SK-N-SH (cell line): ENCODE measurements at regions of chr15 and their contacts with region 1.

Region 1: GRCh38 chr15:88878720-88879184 is 16.6 kb downstream of the HAPLN3 start:
- DNase-seq: peak; percentile 85
- H3K4me3 ChIP-seq: no peak overlapping the region
- H3K27ac ChIP-seq: no peak overlapping the region
- H3K4me1 ChIP-seq: no peaks in the 10 kb centered on the region
- H3K27me3 ChIP-seq: no peaks in the 10 kb centered on the region; the same call in 1 of the 2 replicates
- CTCF ChIP-seq: peak; percentile 73
- EP300 ChIP-seq: no peak
- RAD21 ChIP-seq: peak; percentile 66

Region 2: DNA sequence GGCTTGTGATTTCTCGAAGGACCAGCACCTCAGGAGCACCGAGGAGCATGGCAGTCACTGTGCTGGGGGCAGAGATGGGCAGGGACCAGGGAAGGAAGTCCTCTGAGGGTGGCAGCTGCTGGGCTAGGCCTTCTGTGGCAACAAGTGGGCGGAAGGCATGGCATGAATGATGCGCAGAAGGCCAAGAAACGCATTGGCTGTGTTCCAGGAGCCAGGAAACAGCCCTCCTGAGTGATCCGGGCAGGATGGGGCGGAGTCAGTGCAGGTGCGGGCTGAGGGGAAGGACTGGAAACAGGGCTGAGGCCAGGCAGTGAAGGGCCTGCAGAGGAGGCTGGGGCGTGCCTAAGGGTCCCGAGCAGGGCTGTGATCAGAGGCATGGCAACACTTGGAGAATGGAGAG is 387.6 kb before region 1 on chr15:
- CTCF ChIA-PET with region 1: no interaction called
- POLR2A ChIA-PET with region 1: no interaction called
- DNase-seq: no peak
- H3K4me3 ChIP-seq: no peak overlapping the region
- H3K27ac ChIP-seq: no peak overlapping the region
- H3K4me1 ChIP-seq: no peaks in the 10 kb centered on the region
- H3K27me3 ChIP-seq: no peaks in the 10 kb centered on the region
- CTCF ChIP-seq: no peak
- EP300 ChIP-seq: no peak
- RAD21 ChIP-seq: no peak

Region 3: GRCh38 chr15:88797663-88798339 is 81.0 kb before region 1 on chr15:
- CTCF ChIA-PET with region 1: no interaction called
- POLR2A ChIA-PET with region 1: no interaction called
- DNase-seq: no peak
- H3K4me3 ChIP-seq: no peak overlapping the region
- H3K27ac ChIP-seq: no peak overlapping the region
- H3K4me1 ChIP-seq: no peaks in the 10 kb centered on the region
- H3K27me3 ChIP-seq: peaks cover 12% of the 10 kb centered on the region
- CTCF ChIP-seq: no peak
- EP300 ChIP-seq: no peak
- RAD21 ChIP-seq: no peak

Region 4: GRCh38 chr15:88841236-88841635 is 37.5 kb before region 1 on chr15:
- CTCF ChIA-PET with region 1: no interaction called
- POLR2A ChIA-PET with region 1: no interaction called
- DNase-seq: no peak
- H3K4me3 ChIP-seq: no peak overlapping the region
- H3K27ac ChIP-seq: no peak overlapping the region
- H3K4me1 ChIP-seq: no peaks in the 10 kb centered on the region
- H3K27me3 ChIP-seq: no peaks in the 10 kb centered on the region; the same call in 1 of the 2 replicates
- CTCF ChIP-seq: no peak
- EP300 ChIP-seq: no peak
- RAD21 ChIP-seq: no peak

Region 5: DNA sequence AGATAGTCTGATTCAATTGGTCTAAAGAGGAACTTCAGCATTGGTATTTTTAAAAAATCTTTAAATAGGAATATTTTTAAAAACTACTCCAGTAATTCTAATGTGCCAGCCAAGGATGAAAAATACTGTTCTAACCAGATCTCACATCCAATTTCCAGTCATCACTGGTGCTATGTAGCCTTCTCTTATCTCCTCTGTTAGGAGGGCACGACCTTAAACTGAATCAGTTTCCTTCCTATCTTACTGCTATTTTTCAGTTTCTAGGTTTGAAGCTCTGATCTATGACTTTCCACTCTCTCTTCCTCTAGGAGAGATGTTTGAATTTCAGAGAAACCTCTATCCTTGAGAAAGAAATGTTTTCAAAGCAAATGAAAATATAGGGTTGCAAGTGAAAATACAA is 15.3 kb before region 1 on chr15:
- CTCF ChIA-PET with region 1: interaction called, 18 read pairs
- POLR2A ChIA-PET with region 1: no interaction called
- DNase-seq: no peak
- H3K4me3 ChIP-seq: no peak overlapping the region
- H3K27ac ChIP-seq: no peak overlapping the region
- H3K4me1 ChIP-seq: no peaks in the 10 kb centered on the region; a peak in 1 of 4 replicates
- H3K27me3 ChIP-seq: no peaks in the 10 kb centered on the region; the same call in 1 of the 2 replicates
- CTCF ChIP-seq: no peak
- EP300 ChIP-seq: no peak
- RAD21 ChIP-seq: no peak

Region 6: DNA sequence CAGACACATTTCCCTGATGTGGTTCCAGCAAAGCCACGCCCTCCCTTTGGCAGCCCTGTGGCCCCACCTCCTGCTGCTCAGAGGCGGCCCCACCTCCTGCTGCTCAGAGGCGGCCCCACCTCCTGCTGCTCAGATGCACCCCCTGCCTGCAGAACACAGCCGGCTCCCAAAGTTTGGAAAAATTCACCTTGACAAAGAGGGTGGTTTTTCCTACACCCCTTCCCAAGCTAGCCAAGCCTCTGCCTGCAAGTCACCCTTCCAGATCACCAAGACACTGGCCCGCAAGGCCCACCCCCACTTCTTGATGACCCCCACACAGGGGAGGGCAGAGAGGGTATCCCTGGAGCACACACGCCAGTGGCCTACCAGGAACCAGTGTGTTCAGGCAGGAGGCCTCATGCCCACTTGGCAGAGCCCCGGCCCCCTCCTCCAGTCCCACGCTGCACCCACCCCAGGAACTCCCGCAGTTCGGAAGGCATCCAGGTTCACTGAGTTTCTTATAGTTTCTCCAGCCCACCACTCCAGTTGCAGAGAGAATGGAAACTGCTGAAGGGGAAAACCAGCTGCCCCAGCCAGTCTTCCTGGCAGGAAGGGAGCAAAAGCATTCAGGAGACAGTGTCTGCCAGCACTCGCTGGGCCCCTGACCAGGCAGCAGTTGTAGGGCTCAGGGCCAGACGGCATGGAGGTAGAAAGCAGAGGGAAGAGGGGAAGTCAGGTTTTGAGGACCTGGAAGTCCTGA is 18.9 kb after region 1 on chr15:
- CTCF ChIA-PET with region 1: interaction called, 14 read pairs
- POLR2A ChIA-PET with region 1: no interaction called
- DNase-seq: peak; percentile 88
- H3K4me3 ChIP-seq: no peak overlapping the region
- H3K27ac ChIP-seq: peak overlapping the region in 1 of 2 experiments; percentile 36; a peak in 1 of 4 replicates
- H3K4me1 ChIP-seq: peaks cover 5 to 23% of the 10 kb centered on the region in 2 experiments; a peak in 2 of 4 replicates
- H3K27me3 ChIP-seq: no peaks in the 10 kb centered on the region
- CTCF ChIP-seq: peak; percentile 72
- EP300 ChIP-seq: no peak
- RAD21 ChIP-seq: peak; percentile 41

Region 7: DNA sequence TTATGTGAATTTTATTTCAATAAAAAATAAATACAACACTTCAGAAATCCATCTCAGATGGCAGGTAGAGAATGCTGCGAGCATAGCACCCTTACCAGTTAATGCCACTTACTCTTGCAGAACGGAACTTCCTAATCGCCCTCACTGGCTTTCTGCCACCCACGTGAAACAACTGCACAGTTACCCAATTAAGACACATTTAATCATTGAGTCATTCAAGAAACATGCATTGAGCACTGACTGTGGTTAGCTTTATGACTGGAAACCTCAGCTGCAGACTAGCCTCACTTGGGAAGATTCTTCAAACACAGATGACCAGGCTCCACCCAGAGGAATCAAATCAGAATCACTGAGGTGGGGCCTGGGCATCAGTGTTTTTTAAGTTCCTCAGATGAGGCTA is 40.0 kb after region 1 on chr15:
- CTCF ChIA-PET with region 1: no interaction called
- POLR2A ChIA-PET with region 1: no interaction called
- DNase-seq: no peak
- H3K4me3 ChIP-seq: no peak overlapping the region
- H3K27ac ChIP-seq: peak overlapping the region in 1 of 2 experiments; percentile 48; a peak in 2 of 4 replicates
- H3K4me1 ChIP-seq: peaks cover 0 to 12% of the 10 kb centered on the region in 2 experiments; a peak in 1 of 4 replicates
- H3K27me3 ChIP-seq: no peaks in the 10 kb centered on the region
- CTCF ChIP-seq: no peak
- EP300 ChIP-seq: peak in 1 of 2 experiments; percentile 53; a peak in 1 of 4 replicates
- RAD21 ChIP-seq: no peak